GM12878 (cell line): ENCODE measurements at regions of chr10 and their contacts with region 1.

Region 1: DNA sequence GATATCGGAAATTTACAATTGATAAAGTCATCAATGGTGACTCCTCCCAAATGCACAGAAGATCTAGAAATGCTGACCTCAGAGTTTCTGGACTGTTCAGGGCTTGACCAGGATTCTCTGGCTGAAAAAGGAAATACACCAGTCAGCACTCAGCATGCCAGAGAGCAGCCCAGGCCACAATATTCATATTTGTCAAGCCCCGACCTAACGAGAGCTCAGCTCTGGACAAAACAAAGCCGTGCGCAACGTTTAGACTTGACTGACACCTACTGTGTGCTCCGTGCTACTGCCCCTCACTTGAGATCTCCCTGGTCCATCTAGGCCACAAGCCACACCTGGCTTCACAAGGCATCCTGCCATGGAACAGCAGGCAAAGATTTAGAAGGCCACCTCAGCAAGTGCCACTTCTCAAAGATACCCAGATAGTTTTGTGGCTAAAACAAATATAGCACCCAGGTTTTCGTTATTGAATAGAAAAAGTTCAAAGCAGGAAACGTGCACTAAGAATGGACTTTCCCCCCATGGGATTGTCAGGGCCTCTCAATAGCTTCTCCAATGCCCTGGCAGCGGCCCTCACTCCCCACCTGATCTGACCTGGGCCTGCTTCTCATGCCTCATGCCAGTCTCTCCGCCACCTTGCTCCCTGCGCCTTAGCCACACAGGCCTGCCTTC is 218.3 kb downstream of the FAM107B start:
- DNase-seq: peak; percentile 39
- ATAC-seq: peak; percentile 71
- H3K4me3 ChIP-seq: no peak overlapping the region
- H3K27ac ChIP-seq: peak overlapping the region; percentile 46
- H3K4me1 ChIP-seq: peaks cover 42% of the 10 kb centered on the region
- H3K27me3 ChIP-seq: no peaks in the 10 kb centered on the region
- CTCF ChIP-seq: peak; percentile 46 to 68 (median 51); a peak in 5 of 6 replicates
- EP300 ChIP-seq: no peak
- POLR2A ChIP-seq: 0 out of 2 replicates have a peak, but pooled peaks have one; percentile 32
- RAD21 ChIP-seq: peak; percentile 57

Region 2: GRCh38 chr10:14126701-14127440 is 429.6 kb before region 1 on chr10:
- CTCF ChIA-PET with region 1: no interaction called
- POLR2A ChIA-PET with region 1: no interaction called
- RAD21 ChIA-PET with region 1: no interaction called
- SMC1A ChIA-PET with region 1: no interaction called
- in situ Hi-C with region 1: no loop called
- intact Hi-C with region 1: no loop called
- DNase-seq: no peak
- ATAC-seq: no peak
- H3K4me3 ChIP-seq: no peak overlapping the region
- H3K27ac ChIP-seq: no peak overlapping the region
- H3K4me1 ChIP-seq: no peaks in the 10 kb centered on the region
- H3K27me3 ChIP-seq: no peaks in the 10 kb centered on the region
- CTCF ChIP-seq: no peak
- EP300 ChIP-seq: no peak
- POLR2A ChIP-seq: no peak
- RAD21 ChIP-seq: no peak

Region 3: GRCh38 chr10:14500172-14500765 is 56.2 kb before region 1 on chr10:
- CTCF ChIA-PET with region 1: no interaction called
- POLR2A ChIA-PET with region 1: no interaction called
- RAD21 ChIA-PET with region 1: no interaction called
- SMC1A ChIA-PET with region 1: no interaction called
- in situ Hi-C with region 1: no loop called
- intact Hi-C with region 1: loop called (anchors 2 kb)
- DNase-seq: no peak
- ATAC-seq: no peak
- H3K4me3 ChIP-seq: no peak overlapping the region
- H3K27ac ChIP-seq: no peak overlapping the region
- H3K4me1 ChIP-seq: no peaks in the 10 kb centered on the region
- H3K27me3 ChIP-seq: no peaks in the 10 kb centered on the region
- CTCF ChIP-seq: no peak
- EP300 ChIP-seq: no peak
- POLR2A ChIP-seq: no peak
- RAD21 ChIP-seq: no peak

Region 4: DNA sequence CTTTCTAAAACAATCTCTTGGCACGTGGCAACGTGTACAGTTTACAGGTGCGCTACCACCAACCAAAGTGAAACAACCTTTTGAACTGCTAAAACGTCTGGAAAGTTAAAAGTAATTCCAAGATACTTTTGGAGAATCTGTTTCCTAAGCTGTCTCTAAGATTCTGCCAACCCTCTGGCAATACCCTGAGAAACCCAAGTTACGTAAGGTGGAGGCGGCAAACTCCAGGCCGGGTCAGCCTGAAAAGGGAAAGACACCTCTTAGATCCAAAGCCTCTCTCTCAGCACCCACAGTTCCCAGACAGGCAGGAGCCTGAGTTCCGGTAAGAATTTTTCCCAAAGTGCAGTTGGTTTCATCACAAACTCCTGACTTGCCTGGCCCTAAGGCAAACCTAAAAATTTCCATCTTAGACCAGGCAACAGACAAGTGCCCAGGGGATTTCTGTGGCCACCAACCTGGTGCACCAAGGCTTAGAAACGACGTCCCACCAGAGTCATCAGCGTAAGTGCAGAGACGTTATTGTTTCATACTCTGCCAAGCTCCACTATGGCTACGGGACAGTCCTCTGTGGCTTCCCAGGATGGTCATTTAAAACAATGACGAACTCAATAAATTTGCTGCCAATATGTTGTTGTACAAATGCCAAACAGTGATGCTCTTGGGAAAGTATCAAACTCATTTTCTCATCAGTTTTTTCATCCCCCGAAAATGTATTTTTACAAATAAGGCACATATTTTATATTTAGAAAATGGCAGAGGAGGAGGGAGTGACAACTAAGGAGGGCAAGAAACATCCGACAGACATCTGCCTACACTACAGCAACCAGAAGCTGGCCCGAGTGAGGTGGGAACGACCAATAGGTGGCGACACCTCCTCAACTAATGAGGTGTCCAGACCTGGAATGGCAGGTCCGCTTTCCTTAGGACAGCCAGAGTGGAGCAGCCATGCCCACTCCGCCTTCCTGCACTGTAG is 19.9 kb before region 1 on chr10:
- CTCF ChIA-PET with region 1: interaction called, 10 read pairs
- POLR2A ChIA-PET with region 1: no interaction called
- RAD21 ChIA-PET with region 1: no interaction called
- SMC1A ChIA-PET with region 1: interaction called, 6 read pairs
- in situ Hi-C with region 1: no loop called
- intact Hi-C with region 1: no loop called
- DNase-seq: no peak
- ATAC-seq: peak; percentile 88
- H3K4me3 ChIP-seq: no peak overlapping the region
- H3K27ac ChIP-seq: no peak overlapping the region
- H3K4me1 ChIP-seq: peaks cover 3% of the 10 kb centered on the region; the same call in 1 of the 2 replicates
- H3K27me3 ChIP-seq: no peaks in the 10 kb centered on the region
- CTCF ChIP-seq: peak; percentile 65 to 69 (median 66); a peak in 5 of 6 replicates
- EP300 ChIP-seq: no peak
- POLR2A ChIP-seq: no peak
- RAD21 ChIP-seq: peak; percentile 71

Region 5: DNA sequence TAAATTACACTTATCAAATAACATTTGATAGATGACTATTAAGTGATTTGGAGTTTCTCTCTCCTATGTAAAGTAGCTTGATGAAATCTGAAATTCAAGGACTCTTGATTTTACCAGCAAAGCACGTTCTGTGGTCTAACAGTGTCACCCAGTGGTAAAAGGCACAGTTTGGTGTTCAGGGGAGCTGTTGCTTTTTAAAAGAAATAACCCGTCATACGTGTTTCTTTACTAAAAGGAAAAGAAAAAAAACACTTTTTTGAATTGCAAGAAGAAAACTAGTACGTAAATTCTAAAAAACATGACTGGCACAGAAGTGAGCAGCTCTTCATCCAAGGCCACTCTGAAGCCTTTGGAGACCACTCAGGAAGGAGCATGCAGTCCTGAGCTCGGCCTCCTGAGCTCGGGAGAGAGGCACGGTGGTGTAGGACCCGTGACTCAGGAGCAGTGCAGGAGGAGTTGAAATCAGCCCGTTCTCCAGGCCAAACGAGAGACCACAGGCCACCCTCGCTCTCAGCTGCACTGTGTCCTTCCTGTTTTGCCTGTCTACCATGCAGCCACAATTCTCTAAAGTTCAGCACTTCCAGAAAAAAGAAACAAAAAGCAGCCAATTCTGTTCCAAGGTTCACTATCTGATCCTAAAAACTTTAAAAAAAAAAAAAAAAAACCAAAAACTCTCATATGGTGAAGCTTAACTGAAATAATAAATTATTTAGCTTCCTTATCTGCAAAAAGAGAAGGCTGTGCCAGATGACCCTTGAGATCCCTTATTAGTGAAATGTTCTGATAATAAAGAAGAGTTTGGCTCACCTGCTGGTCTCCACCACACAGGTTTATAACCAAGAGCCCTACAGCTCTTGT is 13.1 kb before region 1 on chr10:
- CTCF ChIA-PET with region 1: interaction called, 24 read pairs
- POLR2A ChIA-PET with region 1: interaction called, 3 read pairs
- RAD21 ChIA-PET with region 1: interaction called, 7 read pairs
- SMC1A ChIA-PET with region 1: interaction called, 14 read pairs
- in situ Hi-C with region 1: no loop called
- intact Hi-C with region 1: no loop called
- DNase-seq: no peak
- ATAC-seq: peak; percentile 67
- H3K4me3 ChIP-seq: no peak overlapping the region
- H3K27ac ChIP-seq: peak overlapping the region; percentile 38
- H3K4me1 ChIP-seq: peaks cover 10% of the 10 kb centered on the region
- H3K27me3 ChIP-seq: no peaks in the 10 kb centered on the region
- CTCF ChIP-seq: peak; percentile 6 to 29 (median 18); a peak in 4 of 6 replicates
- EP300 ChIP-seq: no peak
- POLR2A ChIP-seq: no peak
- RAD21 ChIP-seq: peak; percentile 39; the same call in 1 of the 2 replicates

Region 6: DNA sequence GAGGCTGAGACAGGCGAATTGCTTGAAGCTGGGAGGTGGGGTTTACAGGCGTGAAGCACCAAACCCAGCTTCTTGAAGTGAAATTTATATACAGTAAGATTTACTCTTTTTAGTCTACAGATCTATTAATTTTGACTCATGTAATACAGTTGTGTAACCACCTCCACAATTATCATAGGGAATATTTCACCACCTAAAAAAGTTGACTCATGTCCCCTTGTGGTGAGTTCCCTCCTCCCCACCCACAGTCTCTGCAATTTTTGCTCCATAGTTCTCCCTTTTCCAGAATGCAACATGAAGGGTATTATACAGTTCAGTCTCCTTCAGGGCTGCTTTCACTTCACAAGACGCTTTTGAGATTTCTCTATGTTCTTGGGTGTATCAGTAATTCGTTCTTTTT is 61.4 kb after region 1 on chr10:
- CTCF ChIA-PET with region 1: no interaction called
- POLR2A ChIA-PET with region 1: no interaction called
- RAD21 ChIA-PET with region 1: no interaction called
- SMC1A ChIA-PET with region 1: interaction called, 10 read pairs
- in situ Hi-C with region 1: no loop called
- intact Hi-C with region 1: no loop called
- DNase-seq: no peak
- ATAC-seq: no peak
- H3K4me3 ChIP-seq: no peak overlapping the region
- H3K27ac ChIP-seq: no peak overlapping the region
- H3K4me1 ChIP-seq: no peaks in the 10 kb centered on the region
- H3K27me3 ChIP-seq: no peaks in the 10 kb centered on the region
- CTCF ChIP-seq: no peak
- EP300 ChIP-seq: no peak
- POLR2A ChIP-seq: no peak
- RAD21 ChIP-seq: no peak